Activated CD4-positive, alpha-beta T cell treated with anti-CD3 and anti-CD28 coated beads, Interleukin-2, amount 10 ng/mL, durations not matched to agents 24 days and 14 days (primary cell): ENCODE measurements at regions of chr5 and their contacts with region 1.

Region 1: DNA sequence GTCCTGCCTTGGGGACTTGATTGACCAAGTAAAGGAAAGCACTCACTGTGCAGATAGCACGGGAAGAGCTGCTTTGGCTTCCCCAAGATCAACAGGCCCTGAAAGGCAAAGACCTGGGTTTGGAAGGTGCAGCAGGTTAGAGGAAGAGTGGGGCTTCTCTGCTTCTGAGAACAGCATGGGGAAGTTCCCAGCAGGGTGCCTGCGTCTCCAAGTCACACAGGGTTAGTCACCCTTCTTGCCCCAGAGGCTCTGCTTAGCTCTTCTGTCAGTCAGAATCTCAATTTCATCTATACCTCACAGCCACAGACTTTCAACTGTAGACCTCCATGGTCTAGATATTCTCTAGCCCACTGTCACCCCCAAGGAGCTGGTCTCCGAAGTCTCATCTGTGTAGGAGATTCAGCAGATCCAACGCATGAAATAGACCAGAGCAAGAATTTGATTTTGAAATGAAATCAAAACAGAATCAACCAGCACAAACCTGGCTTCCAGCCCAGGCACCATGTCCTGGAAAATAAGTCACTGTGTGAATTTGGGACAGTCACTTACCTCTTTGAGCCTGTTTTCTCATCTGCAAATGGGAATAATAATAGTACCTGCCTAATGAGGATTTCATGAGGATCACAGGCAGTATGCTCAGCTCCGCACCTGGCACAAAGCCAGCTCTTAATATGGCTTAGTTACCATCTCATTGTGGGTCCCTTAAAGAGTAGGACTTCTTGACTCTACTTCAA is 64.0 kb downstream of the SFXN1 start:
- DNase-seq: peak; percentile 78
- H3K4me3 Mint-ChIP-seq: peak overlapping the region; percentile 37
- H3K27ac Mint-ChIP-seq: peak overlapping the region; percentile 49
- H3K4me1 Mint-ChIP-seq: peaks cover 31% of the 10 kb centered on the region
- H3K27me3 Mint-ChIP-seq: peaks cover 4% of the 10 kb centered on the region

Region 2: DNA sequence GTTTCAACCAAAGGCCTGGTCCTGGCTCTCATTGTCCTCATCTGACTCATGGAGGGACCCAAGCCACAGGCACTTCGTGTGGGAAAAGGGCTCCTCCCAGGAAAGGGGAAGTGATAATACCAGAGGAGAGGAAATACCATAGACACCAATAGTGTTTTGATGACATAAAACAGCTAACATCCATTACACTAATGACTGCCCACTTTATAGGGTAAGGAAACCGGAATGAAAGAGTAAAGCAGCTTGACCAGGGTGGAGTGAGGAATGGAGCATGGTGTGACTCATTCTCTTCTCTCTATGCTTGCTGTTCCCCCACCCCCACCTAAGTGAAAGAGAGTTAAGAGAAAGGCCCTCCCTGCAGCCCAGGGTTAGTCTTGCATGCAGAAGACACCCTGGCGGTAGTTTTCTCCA is 48.1 kb after region 1 on chr5:
- intact Hi-C with region 1: loop called (anchors 10 kb)
- DNase-seq: no peak
- H3K4me3 Mint-ChIP-seq: no peak overlapping the region
- H3K27ac Mint-ChIP-seq: no peak overlapping the region
- H3K4me1 Mint-ChIP-seq: peaks cover 4% of the 10 kb centered on the region
- H3K27me3 Mint-ChIP-seq: peaks cover under 1% of the 10 kb centered on the region